Aorta (tissue), 5 donors: ENCODE measurements at regions of chr2 and their contacts with region 1.

Region 1: GRCh38 chr2:17719562-17720371 is 33.8 kb downstream of the SMC6 start:
- DNase-seq: no peak
- ATAC-seq: no peak
- H3K4me3 ChIP-seq: no peak overlapping the region
- H3K27ac ChIP-seq: no peak overlapping the region
- H3K4me1 ChIP-seq: no peaks in the 10 kb centered on the region
- H3K27me3 ChIP-seq: no peaks in the 10 kb centered on the region

Region 2: DNA sequence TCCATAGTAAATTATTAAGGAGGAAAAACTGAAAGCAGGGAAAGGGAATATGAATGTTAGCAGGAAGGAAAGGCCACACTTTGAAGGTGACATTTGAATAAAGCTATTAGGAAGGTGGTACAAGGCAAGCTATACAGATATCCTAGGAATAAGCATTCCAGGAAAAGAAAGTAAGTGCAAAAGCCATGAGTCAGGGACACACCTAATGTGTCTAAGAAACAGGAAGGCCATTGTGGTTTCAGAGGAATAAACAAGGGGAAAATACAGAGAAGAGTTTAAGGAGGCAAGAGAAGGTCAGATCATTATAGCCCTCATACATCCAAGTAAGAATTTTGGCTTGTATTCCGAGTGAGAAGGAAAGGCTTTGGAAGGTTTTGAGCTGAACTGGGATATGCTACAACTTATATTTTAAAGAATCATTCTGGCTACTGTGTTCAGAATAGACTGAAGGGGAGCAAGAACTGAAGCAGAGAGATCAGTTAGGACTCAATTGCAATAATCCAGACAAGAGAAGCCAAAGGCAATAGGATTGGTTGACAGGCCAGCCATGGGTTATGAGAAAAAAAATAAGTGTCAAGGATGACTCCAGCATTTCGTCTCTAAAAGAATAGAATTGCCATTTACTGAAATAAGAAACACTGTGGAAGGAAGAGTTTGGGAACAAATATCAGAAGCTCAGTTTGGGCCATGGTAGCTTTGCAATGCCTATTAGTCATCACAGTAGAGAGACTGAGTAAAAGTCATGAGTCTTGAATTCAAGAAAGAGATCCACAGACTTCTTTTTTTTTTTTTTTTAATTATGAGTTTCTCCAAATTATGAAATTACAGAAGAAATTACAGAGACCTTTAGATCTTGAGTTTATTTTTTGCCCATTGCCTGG is 212.8 kb before region 1 on chr2:
- intact Hi-C with region 1: no loop called
- DNase-seq: no peak
- ATAC-seq: no peak
- H3K4me3 ChIP-seq: no peak overlapping the region
- H3K27ac ChIP-seq: no peak overlapping the region
- H3K4me1 ChIP-seq: no peaks in the 10 kb centered on the region
- H3K27me3 ChIP-seq: no peaks in the 10 kb centered on the region

Region 3: GRCh38 chr2:17830053-17831034 is 110.6 kb after region 1 on chr2:
- intact Hi-C with region 1: loop called (anchors 5 to 10 kb)
- DNase-seq: peak; percentile 77 to 86
- ATAC-seq: peak; percentile 77
- H3K4me3 ChIP-seq: no peak overlapping the region
- H3K27ac ChIP-seq: no peak overlapping the region
- H3K4me1 ChIP-seq: peaks cover 0 to 2% of the 10 kb centered on the region in 2 donors
- H3K27me3 ChIP-seq: no peaks in the 10 kb centered on the region

Region 4: GRCh38 chr2:18149645-18150246 is 430.0 kb after region 1 on chr2:
- intact Hi-C with region 1: loop called in 1 of 2 experiments (anchors 10 kb)
- DNase-seq: no peak
- ATAC-seq: no peak
- H3K4me3 ChIP-seq: no peak overlapping the region
- H3K27ac ChIP-seq: no peak overlapping the region
- H3K4me1 ChIP-seq: no peaks in the 10 kb centered on the region
- H3K27me3 ChIP-seq: no peaks in the 10 kb centered on the region